ENCODE measurements at regions of chr5 and their contacts with region 1.

Region 1: GRCh38 chr5:34695275-34696027 is 39.3 kb downstream of the RAI14 start:
- DNase-seq: no peak
- H3K4me3 ChIP-seq: peak overlapping the region; percentile 9
- H3K27ac ChIP-seq: peak overlapping the region; percentile 63 to 70
- H3K4me1 ChIP-seq: peaks cover 16 to 43% of the 10 kb centered on the region in 2 donors
- H3K27me3 ChIP-seq: no peaks in the 10 kb centered on the region
- CTCF ChIP-seq: no peak

Region 2: DNA sequence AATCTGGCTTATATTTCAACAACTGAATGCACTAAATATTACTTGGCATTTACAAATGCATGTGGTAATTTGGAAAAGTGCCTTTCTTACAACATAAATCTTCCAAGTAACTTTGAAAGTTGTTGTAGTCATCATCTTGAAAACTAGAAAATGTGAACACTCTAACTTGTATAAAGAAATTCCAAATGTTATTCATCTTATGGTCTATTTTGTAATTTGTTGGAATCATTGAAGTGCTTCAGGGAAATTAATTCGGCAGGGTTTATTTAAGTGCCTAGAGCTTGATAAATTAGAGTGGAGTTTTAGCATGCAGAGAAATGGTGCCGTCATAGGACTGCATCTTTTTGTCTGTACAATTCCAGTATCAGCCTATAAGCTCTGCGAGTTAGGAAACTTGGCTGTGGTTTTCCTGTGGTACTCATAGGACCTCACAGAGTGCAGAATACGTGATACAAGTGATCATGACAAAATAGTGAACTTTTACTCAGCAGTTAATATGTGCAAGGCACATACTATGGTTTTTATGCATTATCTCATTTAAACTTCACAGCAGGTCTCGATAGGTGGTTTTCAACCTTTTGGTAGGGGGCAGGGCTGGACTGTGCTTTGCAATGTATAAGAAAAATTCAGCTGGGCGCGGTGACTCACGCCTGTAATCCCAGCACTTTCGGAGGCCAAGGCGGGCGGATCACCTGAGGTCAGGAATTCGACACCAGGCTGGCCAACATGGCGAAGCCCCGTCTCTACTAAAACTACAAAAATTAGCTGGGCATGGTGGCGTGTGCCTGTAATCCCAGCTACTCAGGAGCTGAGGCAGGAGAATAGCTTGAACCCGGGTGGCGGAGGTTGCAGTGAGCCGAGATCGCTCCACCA is 40.3 kb after region 1 on chr5:
- intact Hi-C with region 1: loop called (anchors 5 kb)
- DNase-seq: no peak
- H3K4me3 ChIP-seq: no peak overlapping the region
- H3K27ac ChIP-seq: peak overlapping the region in 1 of 2 donors; percentile 77
- H3K4me1 ChIP-seq: peaks cover 4 to 33% of the 10 kb centered on the region in 2 donors
- H3K27me3 ChIP-seq: no peaks in the 10 kb centered on the region
- CTCF ChIP-seq: no peak